HepG2 (cell line): ENCODE measurements at regions of chr16 and their contacts with region 1.

Region 1: DNA sequence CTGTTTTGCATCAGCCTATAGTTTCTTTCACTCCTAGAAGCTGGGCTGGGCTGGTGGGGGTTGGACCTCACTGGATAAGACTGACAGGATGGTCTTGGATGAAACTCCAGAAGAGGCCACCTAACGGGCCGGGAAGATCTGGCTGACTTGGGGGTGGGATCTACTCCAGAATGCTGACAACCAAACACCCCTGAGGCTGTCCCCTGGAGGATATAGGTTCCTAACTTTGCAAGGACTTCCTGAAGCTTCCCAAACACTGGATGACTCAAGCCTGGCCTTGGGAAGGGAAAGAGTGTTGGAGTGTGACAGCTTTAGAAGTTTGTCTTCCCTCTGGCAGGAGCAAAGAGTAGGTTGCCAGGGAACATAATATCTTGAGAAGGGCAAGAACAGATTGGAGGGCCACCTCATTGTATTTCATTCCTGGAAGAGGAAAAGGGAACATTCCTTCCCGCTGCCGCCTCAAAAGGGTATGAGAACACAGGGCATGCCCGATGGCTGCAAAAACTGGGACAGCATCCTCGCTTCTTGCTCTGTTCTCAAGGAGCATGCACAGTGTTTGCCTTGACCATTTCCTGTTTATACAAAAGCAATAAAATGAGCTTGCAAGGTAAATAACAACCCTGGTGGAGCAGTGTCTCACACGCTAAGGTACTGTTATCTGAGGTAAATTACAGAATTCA is 6.8 kb upstream of the CYB5B start:
- DNase-seq: peak; percentile 58
- ATAC-seq: peak; percentile 55
- H3K4me3 ChIP-seq: peak overlapping the region in 1 of 3 experiments; percentile 8; a peak in 1 of 6 replicates
- H3K27ac ChIP-seq: peak overlapping the region; percentile 47
- H3K4me1 ChIP-seq: peaks cover 73% of the 10 kb centered on the region
- H3K27me3 ChIP-seq: no peaks in the 10 kb centered on the region
- CTCF ChIP-seq: no peak
- EP300 ChIP-seq: no peak
- POLR2A ChIP-seq: no peak
- RAD21 ChIP-seq: no peak

Region 2: DNA sequence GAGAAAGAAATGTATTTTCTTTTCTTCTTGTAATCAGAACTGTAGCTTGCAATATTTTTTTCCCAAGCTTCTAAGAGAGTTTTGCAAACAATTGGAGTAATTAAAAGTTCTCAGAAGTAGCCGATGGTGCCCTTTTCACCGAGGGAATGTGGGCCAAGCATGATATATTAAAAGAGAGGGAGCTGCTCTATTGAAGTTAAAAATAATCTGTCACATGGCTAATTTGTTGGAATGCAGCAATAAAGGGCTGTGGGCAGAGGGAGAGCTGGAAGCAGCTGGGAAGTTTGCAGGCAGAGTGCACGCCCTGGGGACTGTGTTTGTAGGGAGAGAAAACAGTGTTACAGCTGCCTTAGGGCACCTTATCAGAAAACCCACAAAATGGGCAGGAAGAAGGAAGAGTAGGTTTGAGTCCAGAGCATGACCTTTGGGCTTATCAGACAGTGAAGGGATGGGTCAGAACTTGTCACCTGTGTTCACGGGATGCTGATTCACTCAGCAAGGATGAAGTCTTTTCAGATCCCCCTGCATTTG is 13.3 kb before region 1 on chr16:
- CTCF ChIA-PET with region 1: no interaction called
- POLR2A ChIA-PET with region 1: interaction called, 12 read pairs
- in situ Hi-C with region 1: no loop called
- intact Hi-C with region 1: no loop called
- DNase-seq: peak; percentile 94
- ATAC-seq: peak; percentile 92
- H3K4me3 ChIP-seq: peak overlapping the region in 2 of 3 experiments; percentile 15 to 38; a peak in 3 of 6 replicates
- H3K27ac ChIP-seq: peak overlapping the region; percentile 73
- H3K4me1 ChIP-seq: peaks cover 61% of the 10 kb centered on the region
- H3K27me3 ChIP-seq: no peaks in the 10 kb centered on the region
- CTCF ChIP-seq: no peak
- EP300 ChIP-seq: peak in 1 of 2 experiments; percentile 93; a peak in 2 of 4 replicates
- POLR2A ChIP-seq: 0 out of 4 replicates have a peak, but pooled peaks of 1 of the 2 experiments have one; percentile 37
- RAD21 ChIP-seq: no peak